ENCODE measurements at regions of chr11 and their contacts with region 1.

Region 1: GRCh38 chr11:116808386-116809194 is 14.5 kb downstream of the APOA4 start:
- DNase-seq: peak; percentile 91
- H3K4me3 Mint-ChIP-seq: peak overlapping the region; percentile 43
- H3K27ac Mint-ChIP-seq: peak overlapping the region; percentile 98
- H3K4me1 Mint-ChIP-seq: peaks cover 40% of the 10 kb centered on the region
- H3K27me3 Mint-ChIP-seq: no peaks in the 10 kb centered on the region
- CTCF ChIP-seq: no peak

Region 2: DNA sequence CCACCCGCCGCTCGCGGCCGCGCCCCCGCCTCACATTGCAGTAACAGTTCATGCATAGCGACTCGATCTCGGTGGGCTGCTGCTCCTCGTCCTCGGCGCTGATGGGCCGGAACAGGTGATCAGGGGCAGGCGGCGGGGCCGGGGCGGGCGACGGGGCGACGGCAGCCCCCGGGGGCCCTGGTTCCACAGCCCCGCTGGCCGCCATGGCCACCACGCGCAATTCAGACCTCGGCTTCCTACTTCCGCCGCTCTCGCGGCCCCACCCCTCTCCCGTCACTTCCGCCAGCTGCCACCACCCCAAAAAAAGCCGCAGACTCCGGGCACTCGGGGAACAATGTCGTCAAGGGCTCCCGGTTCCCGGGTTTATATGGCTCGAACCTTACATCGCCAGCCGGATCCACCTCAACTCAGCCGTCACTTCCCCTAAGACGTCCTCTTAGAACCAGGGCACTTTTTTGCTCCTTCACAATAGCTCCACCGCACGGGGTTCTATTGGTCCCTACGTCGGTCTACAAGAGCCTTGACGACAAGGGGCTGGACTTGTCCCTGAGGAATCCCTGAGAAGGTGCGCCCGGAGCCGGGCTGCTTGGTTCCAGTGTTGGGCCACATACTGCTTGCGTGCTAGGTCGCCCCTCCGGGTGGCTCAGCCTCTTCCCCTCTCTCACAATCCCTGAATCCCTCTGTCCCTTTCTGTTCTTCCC is 20.7 kb before region 1 on chr11 and contains the start of gene ZPR1:
- CTCF ChIA-PET with region 1: interaction called, 3 read pairs
- POLR2A ChIA-PET with region 1: interaction called, 12 read pairs
- intact Hi-C with region 1: no loop called
- DNase-seq: peak; percentile 58
- H3K4me3 Mint-ChIP-seq: peak within 1 kb of the TSS; percentile 92
- H3K27ac Mint-ChIP-seq: peak within 1 kb of the TSS; percentile 99
- H3K4me1 Mint-ChIP-seq: peaks cover 28% of the 10 kb centered on the region
- H3K27me3 Mint-ChIP-seq: no peaks in the 10 kb centered on the region
- CTCF ChIP-seq: no peak
- total RNA-seq, gene ZPR1: 82.5 and 105 TPM in 2 replicates

Region 3: DNA sequence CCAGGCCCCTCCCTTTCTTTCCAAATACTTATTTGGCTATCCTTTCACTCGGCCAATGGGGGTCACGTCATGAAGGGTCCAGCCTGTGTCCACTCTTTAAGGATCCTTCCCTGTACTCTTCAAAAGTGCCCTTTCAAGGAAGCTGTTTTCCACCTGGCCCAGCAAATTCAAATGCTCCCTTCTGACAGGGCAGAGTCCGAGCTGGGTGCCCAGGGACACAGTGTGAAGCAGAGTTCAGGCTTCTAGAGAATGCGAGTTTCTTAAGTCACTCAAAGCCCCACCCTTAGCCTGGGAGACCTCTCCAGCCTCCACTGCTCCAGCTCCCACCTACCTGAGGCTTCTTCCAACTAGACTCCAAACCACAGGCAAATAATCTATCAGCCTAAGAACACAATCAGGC is 34.3 kb after region 1 on chr11:
- CTCF ChIA-PET with region 1: no interaction called
- POLR2A ChIA-PET with region 1: no interaction called
- intact Hi-C with region 1: no loop called
- DNase-seq: no peak
- H3K4me3 Mint-ChIP-seq: no peak overlapping the region
- H3K27ac Mint-ChIP-seq: no peak overlapping the region
- H3K4me1 Mint-ChIP-seq: no peaks in the 10 kb centered on the region
- H3K27me3 Mint-ChIP-seq: no peaks in the 10 kb centered on the region
- CTCF ChIP-seq: no peak